ENCODE measurements at regions of chr3 and their contacts with region 1.

Region 1: GRCh38 chr3:23519314-23520208 is 286.2 kb upstream of the UBE2E1 start:
- DNase-seq: peak; percentile 72
- H3K4me3 ChIP-seq: peak overlapping the region; percentile 8
- H3K27ac ChIP-seq: peak overlapping the region; percentile 47
- H3K4me1 ChIP-seq: peaks cover 63% of the 10 kb centered on the region
- CTCF ChIP-seq: no peak

Region 2: GRCh38 chr3:23370506-23370905 is 149.1 kb before region 1 on chr3:
- CTCF ChIA-PET with region 1: no interaction called
- POLR2A ChIA-PET with region 1: no interaction called
- intact Hi-C with region 1: no loop called
- DNase-seq: no peak
- H3K4me3 ChIP-seq: no peak overlapping the region
- H3K27ac ChIP-seq: no peak overlapping the region
- H3K4me1 ChIP-seq: peaks cover 46% of the 10 kb centered on the region
- CTCF ChIP-seq: peak; percentile 48; the same call in 1 of the 2 replicates

Region 3: GRCh38 chr3:23442598-23443383 is 76.8 kb before region 1 on chr3:
- CTCF ChIA-PET with region 1: no interaction called
- POLR2A ChIA-PET with region 1: interaction called, 3 read pairs
- intact Hi-C with region 1: loop called (anchors 2 kb)
- DNase-seq: peak; percentile 57
- H3K4me3 ChIP-seq: no peak overlapping the region
- H3K27ac ChIP-seq: no peak overlapping the region
- H3K4me1 ChIP-seq: peaks cover 63% of the 10 kb centered on the region
- CTCF ChIP-seq: no peak

Region 4: GRCh38 chr3:23495507-23495906 is 24.1 kb before region 1 on chr3:
- CTCF ChIA-PET with region 1: no interaction called
- POLR2A ChIA-PET with region 1: interaction called, 12 read pairs
- intact Hi-C with region 1: no loop called
- DNase-seq: no peak
- H3K4me3 ChIP-seq: no peak overlapping the region
- H3K27ac ChIP-seq: no peak overlapping the region
- H3K4me1 ChIP-seq: no peaks in the 10 kb centered on the region
- CTCF ChIP-seq: no peak

Region 5: GRCh38 chr3:23508464-23508863 is 11.1 kb before region 1 on chr3:
- CTCF ChIA-PET with region 1: no interaction called
- POLR2A ChIA-PET with region 1: interaction called, 15 read pairs
- intact Hi-C with region 1: no loop called
- DNase-seq: no peak
- H3K4me3 ChIP-seq: no peak overlapping the region
- H3K27ac ChIP-seq: no peak overlapping the region
- H3K4me1 ChIP-seq: no peaks in the 10 kb centered on the region
- CTCF ChIP-seq: no peak

Region 6: DNA sequence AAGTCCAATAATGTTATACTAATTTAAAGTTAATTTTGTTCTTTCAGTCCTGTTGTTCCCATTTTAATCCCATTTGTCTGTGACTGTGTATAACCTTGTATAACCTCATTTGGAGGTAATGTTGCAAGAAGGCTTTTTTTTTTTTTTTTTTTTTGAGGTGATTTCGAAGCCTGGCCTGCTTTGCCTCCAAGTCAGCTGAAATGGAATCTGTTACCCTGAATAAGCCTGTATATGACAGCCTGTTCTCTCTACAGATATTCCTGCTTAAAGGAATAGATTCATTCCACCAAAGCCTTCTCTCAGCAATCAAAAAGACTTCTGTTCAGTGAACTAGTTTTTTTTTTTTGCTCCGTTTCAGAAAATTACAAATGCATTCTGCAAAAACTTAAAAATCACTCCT is 14.4 kb after region 1 on chr3:
- CTCF ChIA-PET with region 1: no interaction called
- POLR2A ChIA-PET with region 1: interaction called, 16 read pairs
- intact Hi-C with region 1: no loop called
- DNase-seq: no peak
- H3K4me3 ChIP-seq: no peak overlapping the region
- H3K27ac ChIP-seq: no peak overlapping the region
- H3K4me1 ChIP-seq: peaks cover 14% of the 10 kb centered on the region
- CTCF ChIP-seq: no peak

Region 7: DNA sequence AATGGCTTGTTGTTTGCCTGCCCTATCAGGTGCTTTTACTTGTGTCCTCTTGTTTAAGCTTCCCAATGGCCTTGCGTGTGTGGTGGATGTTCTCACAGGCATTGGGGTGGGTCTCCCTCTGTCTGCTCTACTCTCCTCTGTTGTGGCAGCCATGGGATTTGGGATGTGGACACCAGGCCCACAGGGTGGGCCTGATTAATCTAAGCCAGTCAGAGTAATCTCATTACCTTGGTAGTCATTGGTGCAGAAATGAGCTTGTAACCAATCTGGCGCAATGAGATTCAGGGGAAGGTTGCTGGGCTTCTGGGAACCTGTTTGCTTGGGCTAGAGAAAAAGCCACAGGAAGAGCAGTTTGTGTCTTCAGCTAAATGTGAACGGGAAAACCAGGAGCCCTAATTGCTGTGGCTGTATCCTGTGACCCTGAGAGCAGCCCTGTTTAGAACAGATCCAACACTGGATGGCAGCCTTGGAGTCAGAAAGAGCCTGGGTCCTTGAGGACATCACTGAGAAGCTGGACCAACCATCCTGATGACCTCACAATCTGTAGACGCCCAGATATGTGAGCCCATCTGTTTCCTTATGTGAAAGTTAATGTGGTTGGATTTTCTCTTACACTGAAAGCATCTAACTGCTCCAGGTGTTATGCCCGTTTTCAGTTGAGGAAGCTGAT is 128.9 kb after region 1 on chr3:
- CTCF ChIA-PET with region 1: no interaction called
- POLR2A ChIA-PET with region 1: no interaction called
- intact Hi-C with region 1: loop called (anchors 5 kb)
- DNase-seq: no peak
- H3K4me3 ChIP-seq: no peak overlapping the region
- H3K27ac ChIP-seq: peak overlapping the region; percentile 49
- H3K4me1 ChIP-seq: peaks cover 39% of the 10 kb centered on the region
- CTCF ChIP-seq: 0 out of 2 replicates have a peak, but pooled peaks have one; percentile 23

Region 8: GRCh38 chr3:24119321-24119751 is 599.8 kb after region 1 on chr3:
- CTCF ChIA-PET with region 1: no interaction called
- POLR2A ChIA-PET with region 1: no interaction called
- intact Hi-C with region 1: no loop called
- DNase-seq: no peak
- H3K4me3 ChIP-seq: no peak overlapping the region
- H3K27ac ChIP-seq: no peak overlapping the region
- H3K4me1 ChIP-seq: no peaks in the 10 kb centered on the region
- CTCF ChIP-seq: no peak

Measured in OCI-LY7 (cell line).